Gastrocnemius medialis (tissue), 4 donors: ENCODE measurements at regions of chr2 and their contacts with region 1.

Region 1: DNA sequence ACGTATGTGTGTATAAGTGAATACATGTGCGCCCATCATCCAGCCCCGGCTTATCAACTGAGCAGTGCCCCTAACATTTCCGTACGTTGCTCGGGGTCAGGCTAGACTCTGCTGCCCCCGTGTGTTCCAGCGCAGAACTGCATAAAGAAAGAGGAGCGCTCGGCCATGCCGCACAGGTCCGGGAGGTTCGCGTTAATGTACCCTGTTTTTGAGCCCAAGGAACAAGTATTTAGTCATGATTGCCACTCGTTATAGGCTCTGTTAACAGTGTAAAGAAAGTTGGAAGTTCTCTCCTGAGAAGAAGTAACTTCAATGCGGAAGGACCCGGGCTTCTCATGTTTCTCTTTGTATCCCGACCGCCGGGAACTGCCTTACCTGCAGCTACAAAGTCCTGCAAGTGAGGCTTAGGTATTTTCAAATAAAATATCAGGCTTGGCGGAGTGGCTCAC is 55.7 kb downstream of the CD8B2 start:
- DNase-seq: peak; percentile 20 to 45
- ATAC-seq: peak; percentile 77 to 82
- H3K4me3 ChIP-seq: peak overlapping the region in 3 of 4 donors; percentile 32 to 56 (median 46)
- H3K27ac ChIP-seq: no peak overlapping the region
- H3K4me1 ChIP-seq: peaks cover 4% of the 10 kb centered on the region in 2 donors
- H3K27me3 ChIP-seq: peaks cover 0 to 3% (median 0%) of the 10 kb centered on the region in 3 donors
- CTCF ChIP-seq: peak; percentile 72 to 93 (median 85)
- POLR2A ChIP-seq: no peak

Region 2: GRCh38 chr2:106104332-106105062 is 438.3 kb before region 1 on chr2:
- in situ Hi-C with region 1: loop called (anchors 5 to 10 kb)
- intact Hi-C with region 1: loop called (anchors 1 kb)
- DNase-seq: peak in 1 of 2 donors; percentile 41
- ATAC-seq: peak; percentile 55 to 59
- H3K4me3 ChIP-seq: no peak overlapping the region
- H3K27ac ChIP-seq: no peak overlapping the region
- H3K4me1 ChIP-seq: peaks cover 6 to 10% of the 10 kb centered on the region in 2 donors
- H3K27me3 ChIP-seq: no peaks in the 10 kb centered on the region
- CTCF ChIP-seq: peak; percentile 78 to 96 (median 89)
- POLR2A ChIP-seq: no peak

Region 3: DNA sequence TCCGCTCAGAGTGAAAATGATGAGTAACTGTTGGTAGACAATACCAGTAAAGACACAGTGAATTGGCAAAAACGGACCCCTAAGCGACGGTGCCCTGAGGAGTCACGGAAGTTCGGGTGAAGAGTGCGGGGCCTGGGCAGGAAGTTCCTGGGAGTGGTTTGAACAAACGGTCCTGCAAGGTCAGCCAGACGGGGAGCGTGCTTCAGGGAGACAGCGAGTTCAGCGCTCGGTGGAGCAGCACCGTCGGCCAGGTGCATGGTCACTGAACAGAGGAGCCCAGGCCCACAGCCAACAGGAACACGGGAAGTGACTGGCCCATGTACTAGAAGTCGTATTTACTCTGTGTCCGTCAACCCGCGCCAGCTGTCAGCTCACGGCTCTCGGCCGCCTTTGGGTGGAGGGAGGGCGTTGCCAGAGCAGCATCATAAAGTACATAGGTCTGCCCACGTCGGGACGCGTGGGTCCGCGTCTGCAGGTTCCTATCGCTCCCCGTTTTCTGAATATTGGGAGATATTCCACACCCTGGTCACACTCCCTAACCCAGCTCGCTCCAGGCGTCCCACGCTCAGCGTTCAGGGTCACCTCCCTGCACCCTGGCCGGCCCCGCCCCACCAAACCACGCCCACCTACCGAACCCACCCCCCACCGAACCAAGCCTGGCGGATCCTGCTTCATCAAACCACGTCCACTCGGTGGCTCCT is 273.1 kb before region 1 on chr2:
- in situ Hi-C with region 1: no loop called
- intact Hi-C with region 1: no loop called
- DNase-seq: peak in 1 of 2 donors; percentile 41
- ATAC-seq: peak in 1 of 2 donors; percentile 75
- H3K4me3 ChIP-seq: peak overlapping the region; percentile 31 to 61 (median 50)
- H3K27ac ChIP-seq: no peak overlapping the region
- H3K4me1 ChIP-seq: peaks cover 0 to 3% of the 10 kb centered on the region in 2 donors
- H3K27me3 ChIP-seq: no peaks in the 10 kb centered on the region
- CTCF ChIP-seq: no peak
- POLR2A ChIP-seq: no peak